ENCODE measurements at regions of chr21 and their contacts with region 1.

Region 1: DNA sequence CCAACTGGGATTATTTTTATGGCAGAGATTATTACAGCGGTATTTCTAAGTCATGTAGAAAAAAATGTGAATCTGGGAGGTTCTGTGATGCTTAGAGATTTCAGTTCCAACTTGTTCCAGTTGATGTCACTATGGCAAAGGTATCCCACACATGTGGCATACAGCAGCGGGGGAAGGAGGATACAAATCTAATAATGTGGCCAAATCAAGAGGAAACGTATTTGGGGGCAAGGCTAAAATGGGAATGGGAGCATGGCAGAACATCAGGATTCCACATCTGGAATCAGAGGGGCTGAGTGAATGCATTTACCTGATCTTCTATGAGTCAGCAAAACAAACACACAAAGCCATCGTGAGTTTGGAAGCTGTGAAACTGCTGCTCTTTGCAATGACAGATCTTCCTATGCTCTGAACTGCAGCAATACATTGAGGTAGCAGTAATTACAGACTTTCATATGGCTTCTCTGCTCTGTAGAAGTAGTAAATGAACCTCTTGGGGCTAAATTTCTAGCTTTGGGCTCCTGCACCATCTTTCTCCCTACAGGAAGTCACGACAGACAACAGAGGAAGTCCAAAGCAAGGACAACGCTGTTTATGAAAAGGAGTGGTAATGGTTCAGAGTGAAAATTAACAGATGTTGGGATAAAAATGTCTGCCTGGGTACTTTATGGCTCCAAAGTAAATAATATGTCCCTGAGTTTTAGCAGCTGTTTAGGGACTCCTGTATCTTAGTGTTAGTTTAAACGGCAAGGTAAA is 55.5 kb downstream of the GABPA start:
- DNase-seq: no peak
- H3K4me3 ChIP-seq: peak overlapping the region; percentile 12 to 40 (median 38)
- H3K27ac ChIP-seq: peak overlapping the region in 3 of 4 donors; percentile 71 to 75 (median 72)
- H3K4me1 ChIP-seq: peaks cover 0 to 19% (median 15%) of the 10 kb centered on the region in 4 donors
- H3K27me3 ChIP-seq: no peaks in the 10 kb centered on the region
- CTCF ChIP-seq: peak in 3 of 4 experiments; percentile 27 to 48 (median 35)
- EP300 ChIP-seq: no peak
- POLR2A ChIP-seq: no peak

Region 2: DNA sequence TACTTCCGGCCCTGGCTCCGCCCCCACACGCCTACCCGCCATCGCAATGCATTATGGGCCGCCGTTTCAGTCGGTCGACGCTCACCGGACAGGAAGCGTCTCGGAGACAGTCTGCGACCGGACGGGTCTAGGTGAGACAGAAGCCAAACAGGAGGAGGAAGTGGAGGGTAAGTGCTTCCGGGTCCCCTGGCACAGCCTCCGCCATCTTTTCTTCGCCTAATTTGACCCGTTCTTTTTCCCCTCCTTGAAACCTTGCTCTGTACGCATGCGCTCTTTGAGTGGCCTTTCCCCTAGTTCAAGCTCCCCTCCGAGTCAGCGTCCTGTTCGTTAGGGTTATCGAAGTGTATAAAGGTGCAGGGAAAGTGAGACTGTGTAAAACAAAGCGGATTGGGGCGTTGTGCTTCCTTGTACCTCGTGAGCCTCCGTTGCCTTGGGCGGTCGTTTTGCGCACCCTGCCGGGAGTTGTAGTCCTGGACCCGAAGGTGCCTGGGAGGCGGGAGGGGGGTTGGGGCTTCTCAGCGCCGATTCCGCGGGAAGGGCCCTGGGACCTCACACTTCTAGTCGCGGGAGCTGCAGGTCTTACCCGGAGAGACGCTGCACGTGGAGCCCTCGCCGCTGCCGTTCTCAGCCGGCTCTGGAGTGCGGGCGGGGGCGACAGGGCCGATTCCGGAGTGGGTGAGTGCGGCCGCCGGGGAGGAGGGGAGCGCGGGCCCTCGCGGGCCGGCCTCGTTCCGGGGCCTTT is 55.2 kb before region 1 on chr21 and contains the starts of genes ATP5PF and GABPA:
- intact Hi-C with region 1: loop called (anchors 5 kb)
- DNase-seq: peak; percentile 99
- H3K4me3 ChIP-seq: peak within 1 kb of the TSS; percentile 81 to 98 (median 85)
- H3K27ac ChIP-seq: peak within 1 kb of the TSS; percentile 94 to 99 (median 98)
- H3K4me1 ChIP-seq: peaks cover 0 to 55% (median 43%) of the 10 kb centered on the region in 4 donors
- H3K27me3 ChIP-seq: no peaks in the 10 kb centered on the region
- CTCF ChIP-seq: no peak
- EP300 ChIP-seq: peak in 1 of 4 donors; percentile 47
- POLR2A ChIP-seq: no peak
- total RNA-seq, gene ATP5PF: 232 to 283 (median 239) TPM
- total RNA-seq, gene GABPA: 17.6 to 32.5 (median 27.2) TPM

Region 3: DNA sequence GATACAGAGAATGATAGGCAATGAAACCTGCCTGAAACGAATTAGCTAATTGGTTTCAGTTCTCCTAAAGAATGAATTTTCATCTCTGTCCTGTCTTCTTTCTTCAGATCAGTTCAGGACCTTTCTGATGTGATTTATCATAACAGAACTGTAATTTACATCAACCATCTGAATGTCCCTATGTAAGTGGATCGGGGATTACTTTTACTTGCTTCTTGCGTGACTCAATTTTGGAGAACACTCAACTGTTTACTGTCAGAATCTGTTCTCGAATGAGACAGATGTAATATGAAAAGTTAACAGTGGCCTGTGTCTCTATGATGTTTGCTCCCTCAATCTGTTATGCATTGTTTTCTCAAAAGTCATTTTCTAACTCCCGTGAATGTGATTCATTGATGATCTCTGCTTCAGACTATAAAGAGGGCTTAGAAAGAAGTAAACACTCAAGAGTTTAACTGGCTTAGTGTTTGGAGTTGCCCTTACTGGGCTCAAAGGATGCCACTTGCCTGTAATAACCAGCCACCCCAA is 55.5 kb after region 1 on chr21:
- intact Hi-C with region 1: no loop called
- DNase-seq: no peak
- H3K4me3 ChIP-seq: no peak overlapping the region
- H3K27ac ChIP-seq: peak overlapping the region in 2 of 4 donors; percentile 0 to 1
- H3K4me1 ChIP-seq: peaks cover 0 to 14% (median 7%) of the 10 kb centered on the region in 4 donors
- H3K27me3 ChIP-seq: no peaks in the 10 kb centered on the region
- CTCF ChIP-seq: no peak
- EP300 ChIP-seq: no peak
- POLR2A ChIP-seq: no peak

Region 4: DNA sequence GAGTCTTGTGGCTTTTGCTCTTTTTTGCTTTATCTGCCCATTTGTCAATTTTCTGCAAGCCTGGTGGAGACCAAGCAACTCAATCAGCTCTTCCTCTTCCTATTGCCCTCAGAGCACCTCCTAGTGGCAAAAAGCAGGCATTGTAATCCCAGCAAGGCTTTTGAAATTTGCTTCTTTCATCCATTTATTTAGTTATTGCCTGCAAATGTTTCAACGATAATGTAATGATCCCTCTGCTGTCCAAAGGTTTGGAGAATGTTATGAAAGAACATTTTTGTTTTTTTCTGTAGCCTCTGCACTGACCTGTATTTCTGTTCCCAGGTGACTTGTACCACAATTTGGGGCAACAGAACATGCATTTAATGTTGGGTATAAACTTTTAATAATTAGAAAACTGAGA is 72.3 kb after region 1 on chr21:
- intact Hi-C with region 1: loop called (anchors 2 kb)
- DNase-seq: no peak
- H3K4me3 ChIP-seq: no peak overlapping the region
- H3K27ac ChIP-seq: no peak overlapping the region
- H3K4me1 ChIP-seq: peaks cover 0 to 13% (median 4%) of the 10 kb centered on the region in 4 donors
- H3K27me3 ChIP-seq: no peaks in the 10 kb centered on the region
- CTCF ChIP-seq: peak in 3 of 4 experiments; percentile 34 to 68 (median 46)
- EP300 ChIP-seq: no peak
- POLR2A ChIP-seq: no peak

Region 5: DNA sequence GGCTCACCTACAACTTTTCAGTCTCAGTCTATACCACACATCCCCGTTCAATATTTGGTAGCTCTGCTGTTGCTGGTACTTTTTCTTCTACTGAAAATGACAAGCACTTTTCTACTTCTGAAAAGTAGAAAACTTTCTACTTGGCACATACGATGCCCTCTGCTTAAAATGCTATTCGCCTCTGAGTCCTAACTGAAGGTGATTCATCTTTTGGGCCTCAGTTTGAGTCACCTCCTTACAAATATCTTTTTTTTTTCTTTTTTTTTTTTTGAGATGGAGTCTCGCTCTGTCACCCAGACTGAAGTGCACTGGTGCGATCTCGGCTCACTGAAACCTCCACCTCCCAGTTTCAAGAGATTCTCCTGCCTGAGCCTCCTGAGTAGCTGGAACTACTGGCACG is 918.8 kb after region 1 on chr21:
- intact Hi-C with region 1: loop called (anchors 5 kb)
- DNase-seq: no peak
- H3K4me3 ChIP-seq: no peak overlapping the region
- H3K27ac ChIP-seq: no peak overlapping the region
- H3K4me1 ChIP-seq: no peaks in the 10 kb centered on the region
- H3K27me3 ChIP-seq: no peaks in the 10 kb centered on the region
- CTCF ChIP-seq: no peak
- EP300 ChIP-seq: no peak
- POLR2A ChIP-seq: no peak

Measured in sigmoid colon (tissue), 7 donors.